ENCODE measurements at regions of chr2 and their contacts with region 1.

Region 1: GRCh38 chr2:95022309-95023221 is 2.9 kb upstream of the MAL start:
- DNase-seq: peak; percentile 94
- ATAC-seq: peak; percentile 79
- H3K4me3 Mint-ChIP-seq: peak overlapping the region; percentile 29
- H3K27ac Mint-ChIP-seq: peak overlapping the region; percentile 44
- H3K4me1 Mint-ChIP-seq: peaks cover 43% of the 10 kb centered on the region
- H3K27me3 Mint-ChIP-seq: no peaks in the 10 kb centered on the region
- CTCF ChIP-seq: peak; percentile 86

Region 2: DNA sequence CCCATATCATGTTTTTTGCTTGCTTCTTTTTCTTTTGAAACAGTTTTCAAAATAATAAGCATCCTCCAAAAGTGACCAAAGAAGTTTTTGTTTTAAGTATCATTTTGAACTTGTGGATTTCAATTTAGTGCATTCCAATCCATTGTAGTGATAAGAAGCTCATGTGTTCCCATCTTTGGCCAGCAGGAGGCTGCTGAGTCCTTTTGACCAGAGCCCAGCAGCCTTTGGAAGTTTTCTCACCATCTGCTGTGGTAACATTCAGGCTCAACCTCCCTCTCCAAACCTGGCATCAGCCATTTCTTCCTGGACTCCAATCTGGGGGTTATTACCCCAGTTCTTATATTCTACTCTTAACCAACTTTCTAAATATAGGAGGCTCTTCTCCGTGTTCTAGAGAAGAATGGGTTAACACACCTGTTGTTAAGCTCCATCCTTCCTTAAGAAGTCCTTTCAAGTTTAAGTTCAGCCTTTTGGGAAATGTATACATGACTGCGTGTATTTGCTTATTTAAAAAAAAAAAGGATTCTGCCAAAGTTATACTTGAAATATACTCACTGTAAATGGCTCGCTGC is 36.1 kb before region 1 on chr2:
- CTCF ChIA-PET with region 1: interaction called, 14 read pairs
- POLR2A ChIA-PET with region 1: no interaction called
- intact Hi-C with region 1: no loop called
- DNase-seq: peak; percentile 73
- ATAC-seq: peak; percentile 75
- H3K4me3 Mint-ChIP-seq: no peak overlapping the region
- H3K27ac Mint-ChIP-seq: no peak overlapping the region
- H3K4me1 Mint-ChIP-seq: no peaks in the 10 kb centered on the region
- H3K27me3 Mint-ChIP-seq: peaks cover 9% of the 10 kb centered on the region
- CTCF ChIP-seq: peak; percentile 83

Region 3: DNA sequence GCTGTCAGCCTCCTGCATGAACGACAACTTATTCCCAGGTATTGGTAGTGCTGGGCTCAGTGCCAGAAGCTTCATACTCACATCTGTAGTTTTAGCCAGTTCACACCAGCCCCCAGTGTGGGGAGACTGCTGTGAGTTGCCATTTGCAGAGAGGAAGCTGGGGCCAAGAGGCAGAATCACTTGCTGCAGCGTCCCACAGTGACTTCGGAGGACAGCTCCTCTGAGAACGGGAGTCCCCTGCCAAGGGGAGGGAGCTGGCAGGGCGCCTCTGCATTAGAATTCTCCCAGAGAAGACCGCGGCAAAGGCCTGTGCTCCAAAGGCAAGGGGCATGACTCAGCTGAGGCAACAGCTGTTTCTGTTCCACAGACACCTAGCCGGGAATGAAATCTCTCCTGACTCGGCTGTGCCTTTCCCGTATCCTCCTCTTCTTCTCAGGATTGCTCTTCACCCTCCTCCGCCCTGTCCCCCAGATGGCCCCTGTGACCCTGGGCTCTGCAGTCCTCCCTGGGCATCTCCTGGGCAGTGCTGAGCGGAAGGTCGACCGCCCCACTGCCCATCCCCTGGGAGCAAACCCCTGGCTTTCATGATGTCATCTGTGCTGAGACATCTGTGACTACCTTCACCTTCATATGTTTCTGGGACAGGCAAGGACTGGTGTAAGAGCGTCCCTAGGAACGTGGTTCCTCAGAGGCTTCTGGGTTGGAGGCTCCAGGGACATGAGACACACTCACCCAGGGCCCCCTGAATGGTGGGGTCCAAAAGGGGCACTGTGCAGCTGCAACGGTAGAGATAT is 20.9 kb after region 1 on chr2:
- CTCF ChIA-PET with region 1: interaction called, 31 read pairs
- POLR2A ChIA-PET with region 1: interaction called, 4 read pairs
- intact Hi-C with region 1: no loop called
- DNase-seq: peak; percentile 83
- ATAC-seq: peak; percentile 74
- H3K4me3 Mint-ChIP-seq: no peak overlapping the region
- H3K27ac Mint-ChIP-seq: peak overlapping the region; percentile 23
- H3K4me1 Mint-ChIP-seq: peaks cover 76% of the 10 kb centered on the region
- H3K27me3 Mint-ChIP-seq: no peaks in the 10 kb centered on the region
- CTCF ChIP-seq: no peak

Region 4: GRCh38 chr2:95062242-95063085 is 39.9 kb after region 1 on chr2:
- CTCF ChIA-PET with region 1: interaction called, 142 read pairs
- POLR2A ChIA-PET with region 1: interaction called, 3 read pairs
- intact Hi-C with region 1: no loop called
- DNase-seq: no peak
- ATAC-seq: peak; percentile 26
- H3K4me3 Mint-ChIP-seq: no peak overlapping the region
- H3K27ac Mint-ChIP-seq: peak overlapping the region; percentile 80
- H3K4me1 Mint-ChIP-seq: peaks cover 27% of the 10 kb centered on the region
- H3K27me3 Mint-ChIP-seq: no peaks in the 10 kb centered on the region
- CTCF ChIP-seq: no peak

Region 5: DNA sequence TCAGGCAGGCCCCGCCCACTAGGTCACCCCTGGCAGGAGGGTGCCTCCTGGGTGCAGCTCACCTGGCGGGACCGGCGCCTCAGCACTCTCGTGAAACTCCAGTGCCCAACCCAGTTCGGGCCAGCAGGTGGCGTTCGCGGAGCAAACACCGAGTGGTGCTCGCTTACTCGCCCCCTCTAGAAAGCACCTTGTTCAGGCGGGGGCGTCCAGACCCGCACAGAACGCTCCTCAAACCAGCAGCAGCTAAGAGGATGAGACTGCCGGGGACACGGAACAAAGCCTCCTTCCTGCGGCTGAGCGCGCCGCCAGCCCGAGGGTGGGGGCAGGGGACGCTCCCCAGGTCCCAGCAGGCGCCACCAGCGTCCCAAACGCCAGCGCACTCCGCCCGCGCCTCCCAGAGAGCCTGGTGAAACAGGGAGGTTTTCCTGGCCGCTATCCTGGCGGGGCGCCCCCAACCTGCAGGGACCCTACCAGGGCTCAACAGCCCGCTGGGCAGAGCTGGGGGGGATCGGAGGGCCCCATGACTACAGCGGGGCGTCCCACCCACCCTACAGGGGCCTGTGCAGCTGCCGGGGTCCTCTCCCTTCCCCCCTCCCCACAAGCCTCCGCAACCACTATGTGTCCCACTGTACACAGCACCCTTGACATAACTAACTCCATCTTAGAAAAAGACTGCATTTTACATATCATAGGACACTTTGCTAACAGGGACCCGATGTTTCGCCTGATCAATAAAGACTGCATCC is 54.4 kb after region 1 on chr2:
- CTCF ChIA-PET with region 1: interaction called, 375 read pairs
- POLR2A ChIA-PET with region 1: interaction called, 104 read pairs
- intact Hi-C with region 1: loop called (anchors 2 kb)
- DNase-seq: peak; percentile 98
- ATAC-seq: peak; percentile 75
- H3K4me3 Mint-ChIP-seq: peak overlapping the region; percentile 80
- H3K27ac Mint-ChIP-seq: peak overlapping the region; percentile 93
- H3K4me1 Mint-ChIP-seq: peaks cover 65% of the 10 kb centered on the region
- H3K27me3 Mint-ChIP-seq: no peaks in the 10 kb centered on the region
- CTCF ChIP-seq: peak; percentile 90

Region 6: GRCh38 chr2:95115418-95115817 is 92.9 kb after region 1 on chr2:
- CTCF ChIA-PET with region 1: interaction called, 143 read pairs
- POLR2A ChIA-PET with region 1: interaction called, 3 read pairs
- intact Hi-C with region 1: loop called (anchors 2 kb)
- DNase-seq: peak; percentile 85
- ATAC-seq: peak; percentile 97
- H3K4me3 Mint-ChIP-seq: no peak overlapping the region
- H3K27ac Mint-ChIP-seq: no peak overlapping the region
- H3K4me1 Mint-ChIP-seq: peaks cover 39% of the 10 kb centered on the region
- H3K27me3 Mint-ChIP-seq: no peaks in the 10 kb centered on the region
- CTCF ChIP-seq: peak; percentile 90

Measured in activated CD8-positive, alpha-beta T cell treated with anti-CD3 and anti-CD28 coated beads for 36 hours (primary cell).